A549 (cell line): ENCODE measurements at regions of chr13 and their contacts with region 1.

Region 1: DNA sequence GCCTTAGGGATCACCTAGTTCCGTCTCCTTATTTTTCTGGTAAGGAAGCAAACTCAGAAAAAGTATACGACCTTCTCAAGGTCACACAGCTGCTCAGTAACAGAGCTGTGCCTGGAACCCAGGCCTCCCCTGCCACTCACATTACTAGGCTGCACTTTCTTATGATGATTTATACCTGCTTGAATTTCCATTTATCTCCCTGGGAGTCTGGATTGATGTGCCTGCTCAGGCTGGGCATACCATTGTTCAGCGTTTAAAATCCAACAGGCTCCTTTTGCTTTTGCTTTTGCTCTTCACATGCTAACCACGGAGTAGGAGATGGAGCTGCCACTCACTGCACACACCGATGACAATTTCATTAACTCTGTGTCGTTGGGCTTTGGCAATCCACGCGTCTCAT is 241.0 kb downstream of the OLFM4 start:
- DNase-seq: no peak
- ATAC-seq: no peak
- H3K4me3 ChIP-seq: no peak overlapping the region
- H3K27ac ChIP-seq: no peak overlapping the region
- H3K4me1 ChIP-seq: no peaks in the 10 kb centered on the region
- CTCF ChIP-seq: no peak
- EP300 ChIP-seq: no peak
- POLR2A ChIP-seq: no peak
- RAD21 ChIP-seq: no peak

Region 2: GRCh38 chr13:53250266-53250875 is 19.3 kb before region 1 on chr13:
- CTCF ChIA-PET with region 1: interaction called, 11 read pairs
- POLR2A ChIA-PET with region 1: no interaction called
- DNase-seq: peak; percentile 3 to 65
- ATAC-seq: peak; percentile 76 to 88
- H3K4me3 ChIP-seq: no peak overlapping the region
- H3K27ac ChIP-seq: no peak overlapping the region
- H3K4me1 ChIP-seq: no peaks in the 10 kb centered on the region
- CTCF ChIP-seq: peak; percentile 75
- EP300 ChIP-seq: no peak
- POLR2A ChIP-seq: no peak
- RAD21 ChIP-seq: peak; percentile 74 to 78

Region 3: GRCh38 chr13:53285896-53286430 is 16.3 kb after region 1 on chr13:
- CTCF ChIA-PET with region 1: no interaction called
- POLR2A ChIA-PET with region 1: no interaction called
- DNase-seq: no peak
- ATAC-seq: no peak
- H3K4me3 ChIP-seq: no peak overlapping the region
- H3K27ac ChIP-seq: no peak overlapping the region
- H3K4me1 ChIP-seq: no peaks in the 10 kb centered on the region
- CTCF ChIP-seq: no peak
- EP300 ChIP-seq: no peak
- POLR2A ChIP-seq: no peak
- RAD21 ChIP-seq: no peak

Region 4: DNA sequence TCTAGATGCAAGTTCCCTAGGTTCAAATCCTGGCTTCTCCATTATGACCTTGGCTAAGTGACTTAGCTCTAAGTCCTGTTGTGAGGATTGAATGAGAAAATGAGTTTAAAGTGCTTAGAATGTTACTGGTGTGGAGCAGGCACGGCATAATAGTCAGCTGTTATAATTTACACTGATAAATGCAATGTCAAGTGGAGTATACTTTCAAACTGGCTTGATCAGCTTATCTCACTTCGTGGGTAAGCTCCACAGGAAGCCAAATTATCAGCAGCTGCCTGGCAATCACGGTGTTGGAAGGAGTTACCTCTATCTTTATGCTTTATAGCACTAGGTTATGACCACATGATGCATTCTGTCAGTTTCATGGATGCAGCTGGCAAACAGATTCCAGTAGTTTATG is 31.8 kb after region 1 on chr13:
- CTCF ChIA-PET with region 1: no interaction called
- POLR2A ChIA-PET with region 1: no interaction called
- DNase-seq: no peak
- ATAC-seq: no peak
- H3K4me3 ChIP-seq: no peak overlapping the region
- H3K27ac ChIP-seq: no peak overlapping the region
- H3K4me1 ChIP-seq: no peaks in the 10 kb centered on the region
- CTCF ChIP-seq: no peak
- EP300 ChIP-seq: no peak
- POLR2A ChIP-seq: no peak
- RAD21 ChIP-seq: no peak